ENCODE measurements at regions of chr17 and their contacts with region 1.

Region 1: GRCh38 chr17:63425482-63425881 is 20.6 kb downstream of the CYB561 start:
- DNase-seq: no peak
- H3K4me3 ChIP-seq: no peak overlapping the region
- H3K27ac ChIP-seq: no peak overlapping the region
- H3K4me1 ChIP-seq: peaks cover 0 to 26% (median 11%) of the 10 kb centered on the region in 3 donors
- H3K27me3 ChIP-seq: no peaks in the 10 kb centered on the region
- CTCF ChIP-seq: peak; percentile 52 to 97 (median 90)
- POLR2A ChIP-seq: no peak

Region 2: DNA sequence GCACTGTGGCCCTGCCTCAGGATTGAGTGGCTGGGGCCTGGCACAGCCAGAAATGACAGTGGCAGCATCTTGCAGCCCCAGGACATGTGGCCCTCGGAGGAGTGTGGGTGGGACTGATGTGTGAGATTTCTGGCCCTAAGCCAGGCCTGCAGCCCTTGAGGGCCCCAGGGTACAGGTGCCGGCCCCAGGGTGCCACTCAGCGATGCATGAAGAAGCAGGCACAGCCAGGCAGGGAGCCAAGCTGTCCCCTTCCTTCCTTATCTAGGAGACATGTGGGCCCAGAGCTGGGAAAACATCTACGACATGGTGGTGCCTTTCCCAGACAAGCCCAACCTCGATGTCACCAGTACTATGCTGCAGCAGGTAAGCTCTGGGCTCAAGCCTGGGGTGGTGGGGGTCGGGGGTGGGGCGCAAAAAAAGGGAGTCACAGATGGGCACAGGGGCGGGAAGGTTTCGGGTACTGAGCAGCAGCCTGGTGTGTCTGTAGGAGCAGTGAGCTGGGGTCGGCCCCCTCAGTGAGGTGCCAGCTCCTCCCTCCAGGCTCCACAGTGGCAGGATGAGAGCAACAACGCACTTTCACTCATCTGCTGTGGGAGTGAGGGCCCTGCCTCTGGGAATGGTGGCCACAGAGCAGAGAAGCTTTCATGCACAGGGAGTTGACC is 55.5 kb after region 1 on chr17:
- intact Hi-C with region 1: loop called (anchors 5 kb)
- DNase-seq: no peak
- H3K4me3 ChIP-seq: no peak overlapping the region
- H3K27ac ChIP-seq: no peak overlapping the region
- H3K4me1 ChIP-seq: peaks cover 15 to 39% (median 29%) of the 10 kb centered on the region in 3 donors
- H3K27me3 ChIP-seq: peaks cover 0 to 58% (median 7%) of the 10 kb centered on the region in 4 donors
- CTCF ChIP-seq: no peak
- POLR2A ChIP-seq: no peak

Region 3: GRCh38 chr17:63827002-63827771 is 401.7 kb after region 1 on chr17 and contains the starts of genes FTSJ3 and PSMC5:
- intact Hi-C with region 1: no loop called
- DNase-seq: peak; percentile 79
- H3K4me3 ChIP-seq: peak within 1 kb of the TSS; percentile 62 to 92 (median 79)
- H3K27ac ChIP-seq: peak within 1 kb of the TSS; percentile 89 to 96 (median 92)
- H3K4me1 ChIP-seq: peaks cover 19 to 57% (median 23%) of the 10 kb centered on the region in 3 donors
- H3K27me3 ChIP-seq: no peaks in the 10 kb centered on the region
- CTCF ChIP-seq: peak; percentile 39 to 50 (median 43)
- POLR2A ChIP-seq: peak in 3 of 4 donors; percentile 67 to 87 (median 71)
- total RNA-seq, gene FTSJ3: 19.8 to 52.3 (median 29.0) TPM
- total RNA-seq, gene PSMC5: 55.0 to 87.9 (median 80.7) TPM

Measured in esophagus squamous epithelium (tissue), 5 donors.